ENCODE measurements at regions of chr4 and their contacts with region 1.

Region 1: GRCh38 chr4:14340321-14340720 is 662.0 kb upstream of the CPEB2 start:
- DNase-seq: no peak
- ATAC-seq: no peak
- H3K4me3 ChIP-seq: no peak overlapping the region
- H3K27ac ChIP-seq: no peak overlapping the region
- H3K4me1 ChIP-seq: no peaks in the 10 kb centered on the region
- H3K27me3 ChIP-seq: no peaks in the 10 kb centered on the region; the same call in 1 of the 2 replicates
- CTCF ChIP-seq: no peak
- POLR2A ChIP-seq: no peak
- RAD21 ChIP-seq: no peak

Region 2: DNA sequence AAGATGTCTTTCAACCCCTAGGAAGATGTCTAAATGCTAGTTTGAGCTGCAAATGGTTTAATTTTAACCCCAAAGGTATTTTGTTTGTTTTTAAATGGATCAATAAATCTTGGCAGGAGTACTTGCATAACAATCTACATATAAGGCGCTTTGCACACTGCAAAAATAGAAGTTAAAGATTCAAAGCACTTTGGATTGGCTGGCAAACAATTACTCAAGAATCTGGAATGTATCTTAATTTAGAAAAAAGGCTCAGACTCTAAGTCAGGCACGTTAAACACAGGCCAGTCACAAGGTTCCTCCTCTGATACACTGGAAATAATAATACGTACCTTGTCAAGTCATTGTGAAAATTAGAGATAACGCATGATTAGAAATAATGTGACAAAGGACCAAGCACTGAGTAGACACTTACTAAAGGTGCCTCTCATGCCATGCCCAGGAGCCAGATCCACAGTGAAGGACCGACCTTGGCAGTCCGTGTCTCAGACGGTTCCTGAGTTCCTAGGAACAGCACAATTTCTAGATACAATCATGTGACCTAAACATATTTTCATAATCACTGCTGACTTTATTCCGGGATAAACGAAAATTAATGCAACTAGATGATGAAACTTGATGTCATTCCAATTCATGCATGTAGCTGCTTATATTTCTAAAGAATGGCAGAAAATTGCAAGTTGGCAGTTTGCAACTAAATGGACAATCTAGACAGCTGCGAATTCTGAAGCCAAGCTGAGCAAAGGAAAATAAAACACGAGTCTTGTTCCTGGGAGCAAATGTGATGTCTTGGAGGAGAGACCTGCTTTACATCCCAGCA is 1693.9 kb after region 1 on chr4:
- CTCF ChIA-PET with region 1: interaction called, 13 read pairs
- POLR2A ChIA-PET with region 1: no interaction called
- dilution Hi-C with region 1: no loop called
- in situ Hi-C with region 1: no loop called
- intact Hi-C with region 1: no loop called
- DNase-seq: peak; percentile 47
- ATAC-seq: peak; percentile 63
- H3K4me3 ChIP-seq: no peak overlapping the region
- H3K27ac ChIP-seq: peak overlapping the region; percentile 30; the same call in 1 of the 2 replicates
- H3K4me1 ChIP-seq: peaks cover 4% of the 10 kb centered on the region; the same call in 1 of the 2 replicates
- H3K27me3 ChIP-seq: no peaks in the 10 kb centered on the region
- CTCF ChIP-seq: no peak
- POLR2A ChIP-seq: no peak
- RAD21 ChIP-seq: no peak